IMR-90 (cell line): ENCODE measurements at regions of chr6 and their contacts with region 1.

Region 1: GRCh38 chr6:23547701-23548161 is 578.3 kb upstream of the NRSN1 start:
- DNase-seq: no peak
- ATAC-seq: no peak
- H3K4me3 ChIP-seq: no peak overlapping the region
- H3K27ac ChIP-seq: no peak overlapping the region
- H3K4me1 ChIP-seq: no peaks in the 10 kb centered on the region
- H3K27me3 ChIP-seq: no peaks in the 10 kb centered on the region
- CTCF ChIP-seq: no peak
- POLR2A ChIP-seq: no peak
- RAD21 ChIP-seq: no peak

Region 2: GRCh38 chr6:23591761-23592160 is 44.0 kb after region 1 on chr6:
- CTCF ChIA-PET with region 1: no interaction called
- POLR2A ChIA-PET with region 1: no interaction called
- dilution Hi-C with region 1: no loop called
- in situ Hi-C with region 1: no loop called
- intact Hi-C with region 1: loop called (anchors 5 kb)
- DNase-seq: no peak
- ATAC-seq: no peak
- H3K4me3 ChIP-seq: no peak overlapping the region
- H3K27ac ChIP-seq: no peak overlapping the region
- H3K4me1 ChIP-seq: no peaks in the 10 kb centered on the region
- H3K27me3 ChIP-seq: no peaks in the 10 kb centered on the region
- CTCF ChIP-seq: no peak
- POLR2A ChIP-seq: no peak
- RAD21 ChIP-seq: no peak

Region 3: DNA sequence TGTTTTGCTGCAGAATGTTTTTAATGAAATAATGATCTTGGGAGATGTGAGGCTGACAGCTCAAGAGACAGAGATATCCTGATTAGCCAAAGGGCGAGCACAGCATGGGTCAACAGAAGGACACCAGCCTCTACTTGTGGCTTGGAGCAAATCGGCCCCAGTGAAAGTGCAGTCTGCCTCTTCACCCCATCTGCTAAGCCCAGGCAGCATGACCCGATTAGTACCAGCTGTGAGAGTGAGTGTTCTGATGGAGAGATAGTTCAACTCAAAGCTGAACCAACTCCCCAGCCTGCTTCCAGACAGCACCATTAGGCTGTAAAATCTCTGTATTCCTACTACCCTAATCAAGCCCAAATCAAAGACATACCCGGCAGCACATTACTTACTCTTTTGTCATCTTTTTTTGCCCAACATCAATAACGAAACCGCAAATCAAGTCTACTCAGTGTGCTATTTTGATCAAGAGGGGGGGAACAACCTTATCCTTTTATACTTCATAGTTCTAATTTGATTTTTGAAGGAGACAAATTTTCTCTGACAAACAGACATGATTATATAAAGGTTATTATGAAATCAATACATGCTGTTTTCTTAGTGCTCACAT is 64.1 kb after region 1 on chr6:
- CTCF ChIA-PET with region 1: no interaction called
- POLR2A ChIA-PET with region 1: no interaction called
- dilution Hi-C with region 1: no loop called
- in situ Hi-C with region 1: no loop called
- intact Hi-C with region 1: no loop called
- DNase-seq: no peak
- ATAC-seq: no peak
- H3K4me3 ChIP-seq: no peak overlapping the region
- H3K27ac ChIP-seq: no peak overlapping the region
- H3K4me1 ChIP-seq: no peaks in the 10 kb centered on the region
- H3K27me3 ChIP-seq: no peaks in the 10 kb centered on the region
- CTCF ChIP-seq: no peak
- POLR2A ChIP-seq: no peak
- RAD21 ChIP-seq: no peak